Aorta (tissue), 5 donors: ENCODE measurements at regions of chr3 and their contacts with region 1.

Region 1: GRCh38 chr3:34947834-34948233 is 691.5 kb upstream of the ARPP21 start:
- DNase-seq: no peak
- ATAC-seq: no peak
- H3K4me3 ChIP-seq: no peak overlapping the region
- H3K27ac ChIP-seq: no peak overlapping the region
- H3K4me1 ChIP-seq: peaks cover 0 to 3% of the 10 kb centered on the region in 2 donors
- H3K27me3 ChIP-seq: no peaks in the 10 kb centered on the region

Region 2: DNA sequence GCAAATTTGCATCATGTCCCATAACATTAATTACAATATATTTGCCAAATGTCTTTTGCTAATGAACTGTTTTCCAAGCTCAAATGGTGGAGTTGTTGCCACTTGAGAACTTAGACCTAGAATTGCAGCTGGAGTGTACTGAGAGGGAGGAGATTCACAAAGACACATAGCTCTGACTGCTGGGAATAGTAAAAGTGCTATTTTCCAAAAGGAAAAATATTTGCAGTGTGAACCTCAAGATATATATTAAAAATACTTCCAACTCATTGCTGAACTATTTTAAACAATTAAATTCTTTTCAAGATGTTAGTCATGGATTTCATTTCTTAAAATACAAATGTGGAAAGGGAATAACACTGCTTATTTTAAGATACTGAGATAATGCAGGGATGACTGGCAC is 24.6 kb after region 1 on chr3:
- intact Hi-C with region 1: loop called in 1 of 2 experiments (anchors 2 kb)
- DNase-seq: no peak
- ATAC-seq: no peak
- H3K4me3 ChIP-seq: no peak overlapping the region
- H3K27ac ChIP-seq: no peak overlapping the region
- H3K4me1 ChIP-seq: no peaks in the 10 kb centered on the region
- H3K27me3 ChIP-seq: no peaks in the 10 kb centered on the region